ENCODE measurements at regions of chrX and their contacts with region 1.

Region 1: GRCh38 chrX:64394874-64395567 is at the start of gene MTMR8:
- DNase-seq: peak; percentile 59 to 66
- ATAC-seq: peak; percentile 70 to 98 (median 90)
- H3K4me3 ChIP-seq: peak within 1 kb of the TSS; percentile 44 to 73 (median 66)
- H3K27ac ChIP-seq: peak within 1 kb of the TSS in 5 of 10 donors; percentile 22 to 52 (median 34)
- H3K4me1 ChIP-seq: peaks cover 0 to 5% (median 0%) of the 10 kb centered on the region in 9 donors
- H3K27me3 ChIP-seq: peaks cover 0 to 16% (median 0%) of the 10 kb centered on the region in 7 donors
- CTCF ChIP-seq: no peak
- total RNA-seq, gene MTMR8: 0.30 to 0.99 (median 0.70) TPM

Region 2: GRCh38 chrX:63979480-63979879 is 415.5 kb before region 1 on chrX:
- intact Hi-C with region 1: no loop called
- DNase-seq: no peak
- ATAC-seq: no peak
- H3K4me3 ChIP-seq: no peak overlapping the region
- H3K27ac ChIP-seq: no peak overlapping the region
- H3K4me1 ChIP-seq: no peaks in the 10 kb centered on the region
- H3K27me3 ChIP-seq: no peaks in the 10 kb centered on the region
- CTCF ChIP-seq: no peak

Region 3: GRCh38 chrX:64205735-64206491 is 189.1 kb before region 1 on chrX:
- intact Hi-C with region 1: loop called in 1 of 10 experiments (anchors 5 kb)
- DNase-seq: peak; percentile 91 to 92
- ATAC-seq: peak; percentile 92 to 96 (median 95)
- H3K4me3 ChIP-seq: peak overlapping the region; percentile 59 to 89 (median 78)
- H3K27ac ChIP-seq: peak overlapping the region; percentile 87 to 95 (median 92)
- H3K4me1 ChIP-seq: peaks cover 0 to 41% (median 20%) of the 10 kb centered on the region in 9 donors
- H3K27me3 ChIP-seq: no peaks in the 10 kb centered on the region
- CTCF ChIP-seq: peak in 4 of 9 donors; percentile 13 to 37 (median 24)

Region 4: DNA sequence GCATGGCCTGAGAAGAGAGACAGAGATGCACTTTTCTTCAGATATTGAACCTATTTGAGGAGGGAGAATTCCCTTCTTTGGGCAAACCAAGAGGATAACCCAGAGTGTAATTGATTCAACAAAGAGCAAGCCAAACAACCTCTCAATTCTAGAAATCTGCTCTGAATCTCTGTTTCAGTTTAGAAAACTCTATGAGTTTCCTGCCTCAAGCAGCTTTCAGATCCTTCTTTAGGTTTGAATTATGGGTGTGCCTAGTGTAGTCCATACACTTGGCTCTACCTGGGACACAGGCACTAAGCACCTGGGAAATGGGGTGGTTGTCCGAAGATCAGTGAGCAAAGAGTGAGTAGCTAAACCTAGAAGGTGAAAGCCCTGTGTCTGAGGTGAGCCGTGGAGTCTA is 52.2 kb after region 1 on chrX:
- intact Hi-C with region 1: no loop called
- DNase-seq: no peak
- ATAC-seq: no peak
- H3K4me3 ChIP-seq: no peak overlapping the region
- H3K27ac ChIP-seq: no peak overlapping the region
- H3K4me1 ChIP-seq: no peaks in the 10 kb centered on the region
- H3K27me3 ChIP-seq: no peaks in the 10 kb centered on the region
- CTCF ChIP-seq: no peak

Measured in heart right ventricle (tissue), 16 donors.